Activated T-helper 2 cell treated with anti-CD3 and anti-CD28 coated beads, Interferon-gamma antibody, Interleukin-2, Interleukin-4, amounts not matched to agents 10 μg/mL and 5 μg/mL and 100 μg/mL, durations not matched to agents 14 hours and 24 hours and 36 hours (primary cell): ENCODE measurements at regions of chr2 and their contacts with region 1.

Region 1: DNA sequence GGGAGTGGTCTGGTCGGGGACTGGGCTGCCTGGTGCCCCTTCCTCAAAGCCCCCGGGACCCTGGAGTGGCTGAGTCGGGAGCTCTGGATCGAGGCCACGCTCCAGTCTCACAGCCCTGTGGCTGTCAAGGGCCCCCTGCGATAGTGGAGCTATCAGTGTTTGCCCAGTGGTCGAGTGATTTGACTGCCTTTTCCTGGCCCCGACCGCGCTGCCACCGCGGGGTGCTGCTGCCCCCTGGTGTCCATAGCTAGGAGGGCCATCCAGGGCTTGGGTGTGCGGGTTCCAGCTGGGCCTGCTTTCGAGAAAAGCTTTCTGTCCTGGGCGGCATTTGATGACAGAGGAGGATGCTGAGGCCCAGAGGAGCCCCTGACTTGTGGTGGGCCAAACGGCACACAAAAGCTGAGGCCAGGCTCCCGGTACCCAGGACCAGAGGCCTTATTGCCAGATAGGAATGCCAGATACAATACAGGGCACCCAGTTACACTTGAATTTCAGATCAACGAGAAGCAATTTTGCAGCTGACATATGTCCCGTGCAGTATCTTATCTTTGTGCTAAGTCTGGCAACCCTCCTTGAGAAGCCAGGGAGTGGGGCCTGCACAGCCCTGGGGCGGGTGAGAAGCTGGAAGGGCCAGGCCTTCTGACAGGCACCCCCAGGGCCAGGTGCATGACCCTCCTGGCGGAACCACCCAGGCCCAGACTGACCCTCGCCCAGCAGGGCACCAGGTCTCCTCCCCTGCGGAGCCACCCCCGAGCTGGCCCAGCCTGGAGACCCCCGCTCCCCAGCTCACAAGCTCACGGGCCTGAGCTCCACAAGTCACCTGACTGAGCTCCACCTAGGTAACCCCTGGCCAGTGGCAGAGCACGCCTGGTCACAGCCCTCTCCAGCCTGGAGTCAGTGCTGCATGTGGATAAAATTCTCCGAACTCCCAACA is 13.0 kb downstream of the ODC1 start:
- DNase-seq: peak; percentile 65
- H3K4me3 Mint-ChIP-seq: no peak overlapping the region
- H3K27ac Mint-ChIP-seq: no peak overlapping the region
- H3K4me1 Mint-ChIP-seq: peaks cover 10% of the 10 kb centered on the region
- H3K27me3 Mint-ChIP-seq: no peaks in the 10 kb centered on the region

Region 2: DNA sequence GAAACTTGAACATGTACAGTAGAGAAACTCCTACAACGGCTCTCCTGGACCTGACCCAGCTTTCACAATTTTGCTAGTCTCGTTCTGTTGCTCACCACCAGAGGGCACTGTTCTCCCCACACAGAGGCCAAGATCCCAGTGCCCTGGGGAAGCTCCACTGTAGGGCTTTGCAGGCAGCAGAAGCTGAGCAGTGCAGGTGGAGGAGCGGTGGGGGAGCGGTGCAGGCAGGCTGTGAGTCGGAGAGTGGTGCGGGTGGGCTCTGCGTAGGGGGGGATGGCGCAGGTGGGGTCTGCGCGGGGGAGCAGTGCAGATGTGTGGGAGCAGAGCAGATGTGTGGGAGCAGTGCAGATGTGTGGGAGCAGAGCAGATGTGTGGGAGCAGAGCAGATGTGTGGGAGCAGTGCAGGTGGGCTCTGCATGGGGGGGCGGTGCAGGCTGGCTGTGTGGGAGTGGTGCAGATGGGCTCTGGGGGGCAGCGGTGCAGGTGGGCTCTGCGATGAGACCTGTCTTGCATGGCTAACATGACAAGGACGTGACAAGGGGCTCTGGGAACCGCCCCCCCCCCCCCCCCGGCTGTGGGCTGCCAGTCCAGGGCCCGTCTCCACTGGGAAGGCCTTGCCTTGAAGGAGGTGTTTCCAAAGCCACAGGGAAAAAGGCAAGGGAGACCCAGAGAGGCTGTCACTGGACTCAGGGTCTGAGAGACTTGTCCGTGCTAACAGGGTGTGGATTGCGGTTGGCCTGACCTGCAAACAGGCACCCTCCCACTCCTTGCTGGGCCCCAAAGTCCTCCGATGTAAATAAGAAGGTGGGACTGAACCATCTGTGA is 362.3 kb before region 1 on chr2:
- intact Hi-C with region 1: loop called (anchors 1 kb)
- DNase-seq: peak; percentile 72
- H3K4me3 Mint-ChIP-seq: no peak overlapping the region
- H3K27ac Mint-ChIP-seq: no peak overlapping the region
- H3K4me1 Mint-ChIP-seq: peaks cover 12% of the 10 kb centered on the region
- H3K27me3 Mint-ChIP-seq: peaks cover 44% of the 10 kb centered on the region

Region 3: GRCh38 chr2:10141736-10142642 is 293.2 kb before region 1 on chr2:
- intact Hi-C with region 1: loop called (anchors 5 kb)
- DNase-seq: no peak
- H3K4me3 Mint-ChIP-seq: peak overlapping the region; percentile 0
- H3K27ac Mint-ChIP-seq: peak overlapping the region; percentile 77
- H3K4me1 Mint-ChIP-seq: peaks cover 24% of the 10 kb centered on the region
- H3K27me3 Mint-ChIP-seq: no peaks in the 10 kb centered on the region

Region 4: DNA sequence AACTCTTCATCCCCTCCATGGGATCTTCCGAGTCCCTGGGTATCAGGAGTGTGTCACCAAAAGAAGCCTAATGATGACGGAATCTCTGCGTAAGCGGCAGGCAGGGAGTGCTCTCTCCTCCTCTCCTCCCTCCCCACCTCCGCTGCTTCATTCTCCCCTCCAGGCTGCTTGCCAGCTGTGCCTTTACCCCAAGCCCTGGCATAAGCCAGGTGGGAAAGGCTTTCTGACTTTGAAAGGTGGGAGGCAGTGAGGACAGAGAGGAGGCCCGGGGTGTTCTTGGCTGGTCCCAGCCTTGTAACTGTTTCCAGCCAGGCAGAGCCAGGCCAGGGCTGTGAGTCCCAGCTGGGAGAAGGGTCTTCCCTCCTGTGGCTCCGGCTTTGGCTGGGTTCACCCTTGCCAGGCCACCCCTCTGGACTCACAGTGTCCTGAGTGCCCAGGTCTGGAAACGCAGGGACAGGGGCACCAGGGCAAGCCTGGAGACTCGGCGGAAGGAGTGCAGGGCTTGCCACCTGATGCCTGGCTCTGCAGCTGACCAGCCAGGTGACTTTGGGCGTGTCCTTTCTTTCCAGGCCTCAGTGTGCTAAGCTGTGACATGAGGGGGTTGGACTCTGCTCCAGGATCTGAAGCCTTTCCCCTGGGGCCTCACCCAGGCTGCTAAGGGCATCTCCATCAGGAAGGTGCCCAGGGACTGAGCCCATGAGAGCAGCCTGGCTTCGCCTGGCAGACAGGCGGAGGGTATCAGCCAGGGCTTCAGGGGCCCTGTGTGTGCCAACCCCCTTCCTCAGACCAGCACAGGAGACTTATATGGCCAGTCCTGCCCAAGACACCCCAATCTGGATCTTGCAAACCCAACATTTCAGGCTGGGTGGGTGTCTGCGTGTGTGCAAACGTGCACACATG is 165.2 kb before region 1 on chr2:
- intact Hi-C with region 1: loop called (anchors 1 kb)
- DNase-seq: no peak
- H3K4me3 Mint-ChIP-seq: no peak overlapping the region
- H3K27ac Mint-ChIP-seq: no peak overlapping the region
- H3K4me1 Mint-ChIP-seq: peaks cover 4% of the 10 kb centered on the region
- H3K27me3 Mint-ChIP-seq: peaks cover 2% of the 10 kb centered on the region

Region 5: DNA sequence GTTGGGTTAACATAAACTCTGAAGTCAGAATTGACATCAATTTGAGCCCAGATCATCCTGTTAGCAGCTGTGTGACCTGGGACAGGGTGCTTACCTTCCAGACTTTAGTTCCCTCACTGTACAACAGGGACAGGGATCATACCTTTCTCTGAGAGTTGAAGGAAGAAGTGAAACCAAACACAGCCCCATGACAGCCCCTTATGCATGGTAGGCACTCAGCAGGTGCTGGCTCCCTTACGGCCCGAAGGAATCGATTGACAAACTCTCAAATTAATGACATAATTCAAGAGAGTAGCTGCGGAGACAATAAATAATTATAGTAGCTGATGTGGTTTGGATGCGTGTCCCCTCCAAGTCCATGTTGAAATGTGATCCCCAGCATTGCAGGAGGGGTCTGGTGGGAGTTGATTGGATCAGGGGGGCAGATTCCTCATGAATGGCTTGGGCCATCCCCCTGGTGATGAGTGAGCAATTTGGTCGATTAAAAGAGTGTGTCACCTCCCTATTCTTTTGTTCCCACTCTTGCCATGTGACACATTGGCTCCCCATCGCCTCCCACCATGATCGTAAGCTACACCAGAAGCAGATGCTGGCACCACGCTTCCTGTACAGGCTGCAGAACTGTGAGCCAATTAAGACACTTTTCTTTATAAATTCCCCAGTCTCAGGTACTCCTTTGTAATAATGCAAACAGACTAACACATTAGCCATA is 59.4 kb before region 1 on chr2:
- intact Hi-C with region 1: no loop called
- DNase-seq: no peak
- H3K4me3 Mint-ChIP-seq: no peak overlapping the region
- H3K27ac Mint-ChIP-seq: no peak overlapping the region
- H3K4me1 Mint-ChIP-seq: peaks cover 40% of the 10 kb centered on the region
- H3K27me3 Mint-ChIP-seq: no peaks in the 10 kb centered on the region